ENCODE measurements at regions of chr10 and their contacts with region 1.

Region 1: GRCh38 chr10:61750929-61751471 is 88.3 kb downstream of the CABCOCO1 start:
- DNase-seq: peak; percentile 25 to 79 (median 58)
- ATAC-seq: peak; percentile 83 to 99 (median 96)
- H3K4me3 ChIP-seq: no peak overlapping the region
- H3K4me3 Mint-ChIP-seq: no peak overlapping the region
- H3K27ac ChIP-seq: no peak overlapping the region
- H3K27ac Mint-ChIP-seq: peak overlapping the region in 1 of 2 donors; percentile 16
- H3K4me1 ChIP-seq: peaks cover 12 to 17% of the 10 kb centered on the region in 2 experiments
- H3K4me1 Mint-ChIP-seq: peaks cover 23 to 30% (median 27%) of the 10 kb centered on the region in 3 donors
- H3K27me3 ChIP-seq: no peaks in the 10 kb centered on the region
- H3K27me3 Mint-ChIP-seq: no peaks in the 10 kb centered on the region

Region 2: DNA sequence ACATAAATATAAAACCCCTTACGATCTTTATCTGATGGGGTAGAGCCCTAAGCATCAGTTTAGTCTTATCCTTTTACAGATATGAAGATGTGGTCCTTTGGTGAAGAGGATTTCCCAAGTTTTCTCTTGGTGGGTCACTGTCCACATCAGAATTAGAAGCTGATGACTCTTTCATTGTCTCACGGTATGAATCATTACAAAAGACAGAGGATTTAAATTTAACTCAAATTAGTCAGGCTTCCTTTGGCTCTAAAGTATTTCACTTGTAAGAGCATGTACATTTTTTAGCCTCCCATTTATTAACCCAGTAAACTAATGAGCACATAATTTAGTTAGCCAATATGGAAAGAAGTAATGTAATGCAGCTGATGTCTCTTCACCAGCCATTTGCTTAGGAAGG is 247.9 kb before region 1 on chr10:
- CTCF ChIA-PET with region 1: no interaction called
- POLR2A ChIA-PET with region 1: no interaction called
- DNase-seq: no peak
- ATAC-seq: no peak
- H3K4me3 ChIP-seq: no peak overlapping the region
- H3K4me3 Mint-ChIP-seq: no peak overlapping the region
- H3K27ac ChIP-seq: no peak overlapping the region
- H3K27ac Mint-ChIP-seq: no peak overlapping the region
- H3K4me1 ChIP-seq: no peaks in the 10 kb centered on the region
- H3K4me1 Mint-ChIP-seq: no peaks in the 10 kb centered on the region
- H3K27me3 ChIP-seq: no peaks in the 10 kb centered on the region
- H3K27me3 Mint-ChIP-seq: peaks cover 6 to 11% of the 10 kb centered on the region in 2 donors

Region 3: GRCh38 chr10:61688551-61689308 is 62.3 kb before region 1 on chr10:
- CTCF ChIA-PET with region 1: no interaction called
- POLR2A ChIA-PET with region 1: no interaction called
- DNase-seq: no peak
- ATAC-seq: no peak
- H3K4me3 ChIP-seq: no peak overlapping the region
- H3K4me3 Mint-ChIP-seq: no peak overlapping the region
- H3K27ac ChIP-seq: no peak overlapping the region
- H3K27ac Mint-ChIP-seq: no peak overlapping the region
- H3K4me1 ChIP-seq: no peaks in the 10 kb centered on the region
- H3K4me1 Mint-ChIP-seq: no peaks in the 10 kb centered on the region
- H3K27me3 ChIP-seq: peaks cover 0 to 3% of the 10 kb centered on the region in 2 experiments
- H3K27me3 Mint-ChIP-seq: peaks cover 8% of the 10 kb centered on the region in 2 donors

Region 4: GRCh38 chr10:61774031-61774430 is 23.0 kb after region 1 on chr10:
- CTCF ChIA-PET with region 1: interaction called in 1 of 2 experiments, 10 read pairs
- POLR2A ChIA-PET with region 1: no interaction called
- DNase-seq: no peak
- ATAC-seq: no peak
- H3K4me3 ChIP-seq: no peak overlapping the region
- H3K4me3 Mint-ChIP-seq: no peak overlapping the region
- H3K27ac ChIP-seq: no peak overlapping the region
- H3K27ac Mint-ChIP-seq: no peak overlapping the region
- H3K4me1 ChIP-seq: no peaks in the 10 kb centered on the region
- H3K4me1 Mint-ChIP-seq: no peaks in the 10 kb centered on the region
- H3K27me3 ChIP-seq: no peaks in the 10 kb centered on the region
- H3K27me3 Mint-ChIP-seq: peaks cover 0 to 2% of the 10 kb centered on the region in 2 donors

Region 5: GRCh38 chr10:61819208-61819607 is 68.2 kb after region 1 on chr10:
- CTCF ChIA-PET with region 1: interaction called in 1 of 2 experiments, 11 read pairs
- POLR2A ChIA-PET with region 1: no interaction called
- DNase-seq: peak in 1 of 35 experiments; percentile 13
- ATAC-seq: no peak
- H3K4me3 ChIP-seq: no peak overlapping the region
- H3K4me3 Mint-ChIP-seq: no peak overlapping the region
- H3K27ac ChIP-seq: no peak overlapping the region
- H3K27ac Mint-ChIP-seq: no peak overlapping the region
- H3K4me1 ChIP-seq: no peaks in the 10 kb centered on the region
- H3K4me1 Mint-ChIP-seq: no peaks in the 10 kb centered on the region
- H3K27me3 ChIP-seq: no peaks in the 10 kb centered on the region
- H3K27me3 Mint-ChIP-seq: no peaks in the 10 kb centered on the region

Region 6: DNA sequence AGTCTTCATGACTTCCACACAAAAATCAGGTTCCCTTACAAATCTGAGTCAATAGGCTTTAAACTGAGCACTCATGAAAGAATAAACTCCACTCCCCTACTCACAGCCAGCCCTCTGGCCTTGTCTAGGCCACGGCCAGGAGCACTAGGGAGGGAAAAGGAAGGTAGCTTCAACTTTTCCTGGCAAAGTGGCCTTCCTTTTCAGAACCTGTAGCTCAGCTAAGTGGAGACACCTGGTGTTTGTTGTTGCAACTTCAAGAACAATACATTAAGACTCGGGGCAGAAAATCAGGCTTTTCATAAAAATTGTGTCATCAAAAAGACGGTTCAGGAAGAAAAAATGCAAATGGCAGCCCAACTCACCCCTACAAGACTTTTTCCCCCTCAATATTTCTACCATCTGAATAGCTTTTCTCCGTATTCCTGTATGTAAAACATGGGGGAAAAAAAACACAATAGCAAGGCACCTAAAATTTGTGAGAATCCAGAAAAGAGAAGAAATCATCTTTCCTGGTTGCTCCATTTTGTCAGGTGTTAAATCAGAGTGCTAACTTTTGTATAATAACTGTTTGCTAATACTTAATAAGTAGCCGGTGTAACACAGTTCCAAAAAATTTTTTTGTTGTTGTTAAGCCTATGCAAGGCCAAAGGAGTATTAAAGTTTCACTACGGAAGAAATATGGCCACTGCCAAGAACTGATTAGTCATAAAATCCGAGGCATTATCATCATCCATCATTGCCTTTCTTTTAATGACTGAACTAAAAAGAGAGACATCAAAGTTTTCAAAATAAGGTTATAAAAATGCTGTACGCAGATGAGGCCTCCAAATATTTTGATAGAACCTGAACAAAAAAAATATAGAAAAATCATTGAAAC is 84.3 kb after region 1 on chr10:
- CTCF ChIA-PET with region 1: interaction called, 7 to 13 read pairs
- POLR2A ChIA-PET with region 1: no interaction called
- DNase-seq: peak in 2 of 35 experiments; percentile 0 to 43
- ATAC-seq: no peak
- H3K4me3 ChIP-seq: no peak overlapping the region
- H3K4me3 Mint-ChIP-seq: no peak overlapping the region
- H3K27ac ChIP-seq: no peak overlapping the region
- H3K27ac Mint-ChIP-seq: peak overlapping the region in 1 of 2 donors; percentile 10
- H3K4me1 ChIP-seq: peaks cover 0 to 11% of the 10 kb centered on the region in 2 experiments
- H3K4me1 Mint-ChIP-seq: peaks cover 14 to 17% (median 16%) of the 10 kb centered on the region in 3 donors
- H3K27me3 ChIP-seq: no peaks in the 10 kb centered on the region
- H3K27me3 Mint-ChIP-seq: no peaks in the 10 kb centered on the region

Region 7: GRCh38 chr10:61987951-61988379 is 237.0 kb after region 1 on chr10:
- CTCF ChIA-PET with region 1: interaction called in 1 of 2 experiments, 3 read pairs
- POLR2A ChIA-PET with region 1: interaction called in 1 of 2 experiments, 18 read pairs
- DNase-seq: peak in 7 of 35 experiments; percentile 3 to 60 (median 23)
- ATAC-seq: peak; percentile 72 to 74 (median 72)
- H3K4me3 ChIP-seq: no peak overlapping the region
- H3K4me3 Mint-ChIP-seq: peak overlapping the region; percentile 10 to 47 (median 28)
- H3K27ac ChIP-seq: peak overlapping the region; percentile 52
- H3K27ac Mint-ChIP-seq: peak overlapping the region; percentile 91 to 94
- H3K4me1 ChIP-seq: peaks cover 3 to 18% of the 10 kb centered on the region in 2 experiments
- H3K4me1 Mint-ChIP-seq: peaks cover 66 to 88% (median 86%) of the 10 kb centered on the region in 3 donors
- H3K27me3 ChIP-seq: no peaks in the 10 kb centered on the region
- H3K27me3 Mint-ChIP-seq: no peaks in the 10 kb centered on the region

Region 8: DNA sequence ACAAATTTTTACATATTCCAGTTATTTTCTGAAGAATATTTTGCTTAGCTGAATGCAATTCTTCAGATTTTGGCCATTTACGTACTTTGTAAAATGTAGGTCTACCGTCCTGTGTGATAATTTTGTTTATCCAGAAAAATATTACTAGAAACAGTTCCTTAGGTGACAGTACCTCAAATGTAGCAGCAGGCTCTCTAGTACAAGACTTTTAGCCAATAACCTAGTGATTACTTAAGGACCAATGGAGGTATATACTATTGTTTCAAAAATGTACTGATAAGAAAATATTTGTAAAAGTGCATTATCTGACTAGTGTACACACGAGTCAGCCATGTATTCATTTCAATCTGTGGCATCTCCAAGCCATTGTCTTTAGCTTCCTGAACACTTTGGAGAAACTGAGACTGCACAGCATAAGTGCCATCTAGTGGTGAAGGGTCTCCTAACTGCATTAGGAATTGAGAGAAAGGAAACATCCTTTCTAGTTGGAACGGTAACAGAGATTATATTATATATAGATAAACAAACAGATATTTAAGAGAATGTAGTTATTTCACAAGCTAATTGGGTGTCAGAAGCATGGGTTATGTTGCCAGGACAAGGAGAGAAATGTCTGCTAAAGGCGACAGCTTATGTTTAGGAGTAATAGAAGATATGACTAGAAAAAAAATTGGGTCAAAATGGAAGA is 493.9 kb after region 1 on chr10:
- CTCF ChIA-PET with region 1: interaction called, 6 to 11 read pairs
- POLR2A ChIA-PET with region 1: no interaction called
- DNase-seq: peak in 31 of 35 experiments; percentile 2 to 82 (median 37)
- ATAC-seq: peak; percentile 76 to 89 (median 81)
- H3K4me3 ChIP-seq: no peak overlapping the region
- H3K4me3 Mint-ChIP-seq: no peak overlapping the region
- H3K27ac ChIP-seq: no peak overlapping the region
- H3K27ac Mint-ChIP-seq: no peak overlapping the region
- H3K4me1 ChIP-seq: peaks cover 3 to 20% of the 10 kb centered on the region in 2 experiments
- H3K4me1 Mint-ChIP-seq: peaks cover 27 to 33% (median 32%) of the 10 kb centered on the region in 3 donors
- H3K27me3 ChIP-seq: no peaks in the 10 kb centered on the region
- H3K27me3 Mint-ChIP-seq: no peaks in the 10 kb centered on the region

Measured in T-cell (primary cell).